Activated B cell treated with CpG ODN at 0.5 μM for 24 hours (primary cell): ENCODE measurements at regions of chr4 and their contacts with region 1.

Region 1: GRCh38 chr4:6250235-6250983 is 19.2 kb upstream of the WFS1 start:
- DNase-seq: no peak
- ATAC-seq: peak; percentile 40
- H3K4me3 Mint-ChIP-seq: no peak overlapping the region
- H3K27ac Mint-ChIP-seq: no peak overlapping the region
- H3K4me1 Mint-ChIP-seq: peaks cover 3% of the 10 kb centered on the region
- H3K27me3 Mint-ChIP-seq: peaks cover 31% of the 10 kb centered on the region
- CTCF ChIP-seq: peak; percentile 55

Region 2: GRCh38 chr4:5998333-5998936 is 252.0 kb before region 1 on chr4:
- CTCF ChIA-PET with region 1: no interaction called
- POLR2A ChIA-PET with region 1: no interaction called
- intact Hi-C with region 1: loop called (anchors 2 kb)
- DNase-seq: peak; percentile 20
- ATAC-seq: no peak
- H3K4me3 Mint-ChIP-seq: no peak overlapping the region
- H3K27ac Mint-ChIP-seq: no peak overlapping the region
- H3K4me1 Mint-ChIP-seq: no peaks in the 10 kb centered on the region
- H3K27me3 Mint-ChIP-seq: peaks cover 7% of the 10 kb centered on the region
- CTCF ChIP-seq: no peak

Region 3: GRCh38 chr4:6269616-6270511 is 19.5 kb after region 1 on chr4 and contains the start of gene WFS1:
- CTCF ChIA-PET with region 1: interaction called, 26 read pairs
- POLR2A ChIA-PET with region 1: no interaction called
- intact Hi-C with region 1: no loop called
- DNase-seq: peak; percentile 97
- ATAC-seq: peak; percentile 99
- H3K4me3 Mint-ChIP-seq: peak within 1 kb of the TSS; percentile 86
- H3K27ac Mint-ChIP-seq: peak within 1 kb of the TSS; percentile 63
- H3K4me1 Mint-ChIP-seq: peaks cover 29% of the 10 kb centered on the region
- H3K27me3 Mint-ChIP-seq: no peaks in the 10 kb centered on the region
- CTCF ChIP-seq: no peak
- total RNA-seq, gene WFS1: 2.4 and 4.3 TPM in 2 replicates

Region 4: GRCh38 chr4:6319530-6320150 is 69.2 kb after region 1 on chr4:
- CTCF ChIA-PET with region 1: interaction called, 232 read pairs
- POLR2A ChIA-PET with region 1: no interaction called
- intact Hi-C with region 1: no loop called
- DNase-seq: no peak
- ATAC-seq: no peak
- H3K4me3 Mint-ChIP-seq: no peak overlapping the region
- H3K27ac Mint-ChIP-seq: no peak overlapping the region
- H3K4me1 Mint-ChIP-seq: no peaks in the 10 kb centered on the region
- H3K27me3 Mint-ChIP-seq: peaks cover 36% of the 10 kb centered on the region
- CTCF ChIP-seq: no peak

Region 5: DNA sequence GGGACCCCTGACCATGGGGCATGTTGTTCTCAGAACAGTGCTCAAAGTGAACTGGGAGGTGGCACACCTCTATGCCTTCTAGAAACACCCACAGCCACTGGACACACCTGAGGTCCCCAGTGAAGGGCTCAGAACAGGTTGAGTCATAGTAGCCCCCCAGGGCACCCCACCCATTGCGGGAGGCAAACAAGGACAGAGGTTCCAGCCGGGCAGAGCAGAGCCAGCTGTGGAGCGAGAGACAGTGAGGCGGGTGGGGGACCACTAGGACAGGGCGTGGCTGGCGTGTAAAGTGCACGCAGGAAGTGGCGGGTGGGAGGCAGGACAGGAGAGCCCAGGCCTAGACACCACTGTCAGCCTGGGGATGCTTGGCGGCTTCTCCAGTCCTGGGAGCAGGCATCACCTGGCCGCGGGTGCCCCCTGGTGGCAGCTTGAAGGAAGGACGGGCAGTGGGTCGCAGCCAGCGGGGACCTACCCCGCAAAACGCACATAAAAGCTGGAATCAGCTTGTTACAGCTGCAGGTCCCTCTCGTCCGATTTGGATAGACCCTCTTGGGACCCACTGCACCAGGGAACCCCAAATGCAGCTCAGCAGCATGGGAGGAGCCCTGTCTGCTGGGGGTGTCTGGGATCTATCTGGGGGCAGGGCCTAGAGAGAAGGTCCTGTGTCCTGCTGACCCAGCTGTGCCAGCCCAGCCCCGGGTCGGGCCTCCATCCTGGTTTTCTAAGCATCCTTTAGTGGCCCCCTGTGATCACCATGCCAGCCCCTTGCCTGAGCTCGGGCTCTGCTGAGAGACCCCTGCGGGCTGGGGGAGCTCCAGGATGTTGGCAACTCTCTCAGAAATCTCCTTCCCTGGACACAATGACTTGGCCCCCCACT is 76.9 kb after region 1 on chr4:
- CTCF ChIA-PET with region 1: interaction called, 232 read pairs
- POLR2A ChIA-PET with region 1: no interaction called
- intact Hi-C with region 1: loop called (anchors 1 kb)
- DNase-seq: peak; percentile 68
- ATAC-seq: peak; percentile 72
- H3K4me3 Mint-ChIP-seq: no peak overlapping the region
- H3K27ac Mint-ChIP-seq: no peak overlapping the region
- H3K4me1 Mint-ChIP-seq: no peaks in the 10 kb centered on the region
- H3K27me3 Mint-ChIP-seq: peaks cover 34% of the 10 kb centered on the region
- CTCF ChIP-seq: no peak

Region 6: DNA sequence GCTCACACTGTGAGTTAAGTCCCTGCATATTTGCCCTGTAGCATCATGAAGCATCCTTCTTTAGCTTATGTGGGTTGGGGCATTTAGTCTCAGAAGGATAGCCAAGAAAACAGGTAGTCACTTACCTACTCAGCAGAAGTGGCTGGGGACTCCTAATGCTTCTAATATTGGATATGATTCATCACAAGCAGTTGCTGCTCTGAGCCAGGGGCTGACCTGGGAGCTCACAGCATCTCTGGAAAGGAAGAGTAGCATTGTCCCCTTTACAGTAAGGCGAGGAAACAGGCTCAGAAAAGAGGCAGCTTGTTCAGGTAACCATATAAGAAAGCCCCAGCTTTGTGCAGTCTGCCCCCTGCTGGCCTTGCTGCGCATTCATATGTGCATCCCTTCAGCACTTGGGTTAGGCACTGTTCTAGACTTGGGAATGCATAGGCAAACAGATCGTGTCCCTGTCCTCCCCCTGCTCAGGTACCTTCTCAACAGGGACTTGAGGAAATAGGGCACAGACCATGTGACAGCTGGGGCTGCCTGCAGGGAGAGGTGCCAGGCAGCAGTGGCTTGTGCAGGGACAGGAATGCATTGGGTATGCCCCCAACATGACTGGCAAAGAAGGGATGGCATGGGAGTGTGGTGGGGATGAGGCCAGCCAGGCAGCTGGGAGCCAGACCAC is 623.5 kb after region 1 on chr4:
- CTCF ChIA-PET with region 1: no interaction called
- POLR2A ChIA-PET with region 1: no interaction called
- intact Hi-C with region 1: loop called (anchors 2 kb)
- DNase-seq: peak; percentile 50
- ATAC-seq: peak; percentile 74
- H3K4me3 Mint-ChIP-seq: no peak overlapping the region
- H3K27ac Mint-ChIP-seq: no peak overlapping the region
- H3K4me1 Mint-ChIP-seq: peaks cover 12% of the 10 kb centered on the region
- H3K27me3 Mint-ChIP-seq: no peaks in the 10 kb centered on the region
- CTCF ChIP-seq: no peak

Region 7: GRCh38 chr4:7307394-7308099 is 1057.1 kb after region 1 on chr4:
- CTCF ChIA-PET with region 1: no interaction called
- POLR2A ChIA-PET with region 1: no interaction called
- intact Hi-C with region 1: no loop called
- DNase-seq: no peak
- ATAC-seq: no peak
- H3K4me3 Mint-ChIP-seq: no peak overlapping the region
- H3K27ac Mint-ChIP-seq: no peak overlapping the region
- H3K4me1 Mint-ChIP-seq: no peaks in the 10 kb centered on the region
- H3K27me3 Mint-ChIP-seq: no peaks in the 10 kb centered on the region
- CTCF ChIP-seq: no peak